Endothelial cell of umbilical vein (primary cell): ENCODE measurements at regions of chr5 and their contacts with region 1.

Region 1: GRCh38 chr5:132797651-132798050 is 15.5 kb upstream of the SOWAHA start:
- DNase-seq: no peak
- H3K4me3 ChIP-seq: no peak overlapping the region
- H3K27ac ChIP-seq: no peak overlapping the region
- H3K4me1 ChIP-seq: no peaks in the 10 kb centered on the region
- H3K27me3 ChIP-seq: peaks cover 10 to 22% of the 10 kb centered on the region in 2 experiments
- CTCF ChIP-seq: no peak
- POLR2A ChIP-seq: no peak

Region 2: GRCh38 chr5:132785365-132785764 is 12.3 kb before region 1 on chr5:
- CTCF ChIA-PET with region 1: interaction called, 11 read pairs
- POLR2A ChIA-PET with region 1: interaction called, 3 read pairs
- dilution Hi-C with region 1: no loop called
- intact Hi-C with region 1: no loop called
- DNase-seq: no peak
- H3K4me3 ChIP-seq: no peak overlapping the region
- H3K27ac ChIP-seq: no peak overlapping the region
- H3K4me1 ChIP-seq: peaks cover 12% of the 10 kb centered on the region
- H3K27me3 ChIP-seq: no peaks in the 10 kb centered on the region
- CTCF ChIP-seq: no peak
- POLR2A ChIP-seq: no peak

Region 3: DNA sequence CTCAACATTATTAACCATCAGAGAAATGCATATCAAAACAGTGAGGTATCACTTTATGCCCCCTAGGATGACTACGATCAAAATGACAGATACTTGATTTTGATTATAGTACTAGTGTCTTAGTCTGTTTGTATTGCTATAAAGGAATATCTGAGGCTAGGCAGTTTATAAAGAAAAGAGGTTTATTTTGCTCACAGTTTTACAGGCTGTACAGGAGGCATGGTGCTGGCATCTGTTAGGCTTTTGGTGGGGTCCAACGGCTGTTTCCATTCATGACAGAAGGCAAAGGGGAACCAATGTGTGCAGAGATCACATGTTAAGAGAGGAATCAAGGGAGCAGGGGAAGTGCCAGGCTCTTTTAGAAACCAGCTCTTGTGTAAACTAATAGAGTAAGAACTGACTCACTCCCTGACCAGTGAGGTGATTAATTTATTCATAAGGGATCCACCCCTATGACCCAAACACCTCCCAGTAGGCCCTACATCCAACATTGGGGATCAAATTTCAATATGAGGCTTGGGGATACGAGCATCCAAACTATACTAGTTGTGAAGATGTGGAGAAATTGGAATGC is 181.8 kb after region 1 on chr5:
- CTCF ChIA-PET with region 1: no interaction called
- POLR2A ChIA-PET with region 1: no interaction called
- dilution Hi-C with region 1: no loop called
- intact Hi-C with region 1: no loop called
- DNase-seq: no peak
- H3K4me3 ChIP-seq: no peak overlapping the region
- H3K27ac ChIP-seq: no peak overlapping the region
- H3K4me1 ChIP-seq: no peaks in the 10 kb centered on the region
- H3K27me3 ChIP-seq: no peaks in the 10 kb centered on the region
- CTCF ChIP-seq: no peak
- POLR2A ChIP-seq: no peak

Region 4: GRCh38 chr5:133220851-133221674 is 423.4 kb after region 1 on chr5:
- CTCF ChIA-PET with region 1: no interaction called
- POLR2A ChIA-PET with region 1: no interaction called
- dilution Hi-C with region 1: no loop called
- intact Hi-C with region 1: no loop called
- DNase-seq: peak; percentile 67
- H3K4me3 ChIP-seq: no peak overlapping the region
- H3K27ac ChIP-seq: peak overlapping the region; percentile 57
- H3K4me1 ChIP-seq: peaks cover 10% of the 10 kb centered on the region
- H3K27me3 ChIP-seq: no peaks in the 10 kb centered on the region
- CTCF ChIP-seq: no peak
- POLR2A ChIP-seq: no peak